RWPE1 (cell line): ENCODE measurements at regions of chr20 and their contacts with region 1.

Region 1: GRCh38 chr20:37356387-37356786 is 10.4 kb downstream of the SRC start:
- DNase-seq: peak; percentile 78
- H3K27ac ChIP-seq: peak overlapping the region; percentile 96
- CTCF ChIP-seq: no peak

Region 2: GRCh38 chr20:37290158-37290810 is 66.1 kb before region 1 on chr20:
- CTCF ChIA-PET with region 1: no interaction called
- POLR2A ChIA-PET with region 1: interaction called, 14 read pairs
- DNase-seq: no peak
- H3K27ac ChIP-seq: peak overlapping the region; percentile 92
- CTCF ChIP-seq: no peak

Region 3: GRCh38 chr20:37327748-37328147 is 28.6 kb before region 1 on chr20:
- CTCF ChIA-PET with region 1: interaction called, 11 read pairs
- POLR2A ChIA-PET with region 1: interaction called, 3 read pairs
- DNase-seq: no peak
- H3K27ac ChIP-seq: peak overlapping the region; percentile 21; the same call in 1 of the 2 replicates
- CTCF ChIP-seq: no peak